SK-N-SH (cell line): ENCODE measurements at regions of chr12 and their contacts with region 1.

Region 1: GRCh38 chr12:89019408-89020120 is 332.7 kb downstream of the DUSP6 start:
- DNase-seq: peak; percentile 72
- H3K4me3 ChIP-seq: peak overlapping the region; percentile 37 to 58
- H3K27ac ChIP-seq: peak overlapping the region in 1 of 2 experiments; percentile 45; a peak in 2 of 4 replicates
- H3K4me1 ChIP-seq: no peaks in the 10 kb centered on the region; a peak in 2 of 4 replicates
- H3K27me3 ChIP-seq: no peaks in the 10 kb centered on the region
- CTCF ChIP-seq: peak; percentile 89
- EP300 ChIP-seq: no peak
- RAD21 ChIP-seq: peak; percentile 97

Region 2: GRCh38 chr12:88960213-88960878 is 59.2 kb before region 1 on chr12:
- CTCF ChIA-PET with region 1: no interaction called
- POLR2A ChIA-PET with region 1: no interaction called
- DNase-seq: no peak
- H3K4me3 ChIP-seq: no peak overlapping the region
- H3K27ac ChIP-seq: 0 out of 4 replicates have a peak overlapping the region, but pooled peaks of 1 of the 2 experiments have one; percentile 2
- H3K4me1 ChIP-seq: no peaks in the 10 kb centered on the region; a peak in 1 of 4 replicates
- H3K27me3 ChIP-seq: no peaks in the 10 kb centered on the region
- CTCF ChIP-seq: no peak
- EP300 ChIP-seq: no peak
- RAD21 ChIP-seq: no peak

Region 3: DNA sequence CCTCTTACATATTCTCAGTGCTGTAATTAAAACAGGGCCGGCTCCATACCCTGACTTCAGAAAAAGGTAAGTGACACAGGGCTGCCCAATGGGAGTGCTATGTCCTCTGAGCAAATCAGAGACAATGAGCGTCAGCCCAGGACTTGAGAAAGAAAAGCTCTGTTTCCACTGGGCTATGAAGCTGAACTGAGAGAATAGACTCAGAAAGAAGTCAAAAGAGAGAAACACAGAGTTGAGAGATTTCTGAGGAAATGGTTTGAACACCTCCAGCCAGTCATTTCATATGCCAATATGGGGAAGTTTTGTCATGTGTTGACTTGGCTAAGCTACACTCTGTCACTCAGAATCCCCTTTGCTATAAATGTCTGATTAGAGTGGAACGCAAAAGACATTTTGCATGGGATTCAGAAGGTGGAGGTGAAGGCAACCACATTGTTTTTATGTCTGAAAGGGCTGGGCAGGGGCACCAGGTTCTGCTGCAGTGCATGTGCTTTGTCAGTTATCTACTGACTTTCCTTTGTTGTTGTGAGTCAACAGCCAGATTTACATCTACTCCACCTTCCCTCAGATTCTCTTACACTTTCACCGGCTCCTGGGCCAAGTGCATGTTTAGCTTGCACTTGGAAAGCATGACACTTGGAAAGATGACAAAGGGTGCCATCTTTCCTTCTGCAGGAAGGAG is 19.4 kb after region 1 on chr12:
- CTCF ChIA-PET with region 1: interaction called, 23 read pairs
- POLR2A ChIA-PET with region 1: no interaction called
- DNase-seq: no peak
- H3K4me3 ChIP-seq: no peak overlapping the region
- H3K27ac ChIP-seq: peak overlapping the region in 1 of 2 experiments; percentile 67; a peak in 2 of 4 replicates
- H3K4me1 ChIP-seq: peaks cover 6 to 7% of the 10 kb centered on the region in 2 experiments; a peak in 2 of 4 replicates
- H3K27me3 ChIP-seq: no peaks in the 10 kb centered on the region
- CTCF ChIP-seq: no peak
- EP300 ChIP-seq: no peak
- RAD21 ChIP-seq: no peak

Region 4: GRCh38 chr12:89098441-89099112 is 79.0 kb after region 1 on chr12:
- CTCF ChIA-PET with region 1: no interaction called
- POLR2A ChIA-PET with region 1: no interaction called
- DNase-seq: peak; percentile 4
- H3K4me3 ChIP-seq: no peak overlapping the region
- H3K27ac ChIP-seq: peak overlapping the region in 1 of 2 experiments; percentile 4; a peak in 1 of 4 replicates
- H3K4me1 ChIP-seq: peaks cover 10 to 23% of the 10 kb centered on the region in 2 experiments; a peak in 3 of 4 replicates
- H3K27me3 ChIP-seq: no peaks in the 10 kb centered on the region
- CTCF ChIP-seq: no peak
- EP300 ChIP-seq: no peak
- RAD21 ChIP-seq: no peak

Region 5: DNA sequence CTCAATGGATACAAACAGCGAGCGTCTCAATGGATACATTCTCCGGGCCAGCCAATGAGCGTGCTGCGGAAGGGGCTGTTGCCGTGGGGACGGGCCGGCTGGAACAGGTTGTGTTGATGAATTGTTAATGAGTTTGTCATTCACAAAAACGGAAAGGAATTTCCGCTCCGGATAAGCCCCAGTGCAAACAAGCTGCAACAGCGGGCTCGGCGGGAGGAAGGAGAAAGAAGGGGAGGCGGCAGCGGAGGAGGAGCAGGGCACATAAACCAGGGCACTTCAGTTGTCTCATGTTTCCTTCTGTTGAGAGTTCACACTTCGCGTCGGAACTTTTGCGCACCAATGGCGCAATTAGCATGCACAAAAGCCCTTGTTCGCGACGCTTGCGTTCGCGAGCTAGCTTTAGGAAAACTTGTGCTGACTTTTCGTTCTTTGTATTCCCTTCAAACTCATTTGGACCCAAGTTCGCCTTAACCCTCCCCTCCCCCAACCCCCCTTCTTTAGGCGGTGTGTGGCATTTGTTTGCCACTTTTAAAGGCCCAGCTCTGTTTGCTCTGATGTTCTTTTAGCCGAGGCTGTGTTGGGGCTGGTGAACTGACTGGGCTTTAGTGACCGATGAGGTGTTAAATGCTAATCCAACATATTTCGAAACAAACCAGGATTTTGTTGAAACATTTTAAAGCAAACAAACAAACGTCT is 333.1 kb after region 1 on chr12 and contains the start of gene DUSP6:
- CTCF ChIA-PET with region 1: interaction called, 12 read pairs
- POLR2A ChIA-PET with region 1: interaction called, 5 read pairs
- DNase-seq: peak; percentile 93
- H3K4me3 ChIP-seq: peak within 1 kb of the TSS; percentile 94 to 99
- H3K27ac ChIP-seq: peak within 1 kb of the TSS; percentile 98 to 100
- H3K4me1 ChIP-seq: peaks cover 22 to 43% of the 10 kb centered on the region in 2 experiments; a peak in 3 of 4 replicates
- H3K27me3 ChIP-seq: no peaks in the 10 kb centered on the region
- CTCF ChIP-seq: no peak
- EP300 ChIP-seq: peak; percentile 75 to 78; a peak in 2 of 4 replicates
- RAD21 ChIP-seq: no peak
- polyA plus RNA-seq, gene DUSP6: 64.8 and 71.4 TPM in 2 replicates

Region 6: DNA sequence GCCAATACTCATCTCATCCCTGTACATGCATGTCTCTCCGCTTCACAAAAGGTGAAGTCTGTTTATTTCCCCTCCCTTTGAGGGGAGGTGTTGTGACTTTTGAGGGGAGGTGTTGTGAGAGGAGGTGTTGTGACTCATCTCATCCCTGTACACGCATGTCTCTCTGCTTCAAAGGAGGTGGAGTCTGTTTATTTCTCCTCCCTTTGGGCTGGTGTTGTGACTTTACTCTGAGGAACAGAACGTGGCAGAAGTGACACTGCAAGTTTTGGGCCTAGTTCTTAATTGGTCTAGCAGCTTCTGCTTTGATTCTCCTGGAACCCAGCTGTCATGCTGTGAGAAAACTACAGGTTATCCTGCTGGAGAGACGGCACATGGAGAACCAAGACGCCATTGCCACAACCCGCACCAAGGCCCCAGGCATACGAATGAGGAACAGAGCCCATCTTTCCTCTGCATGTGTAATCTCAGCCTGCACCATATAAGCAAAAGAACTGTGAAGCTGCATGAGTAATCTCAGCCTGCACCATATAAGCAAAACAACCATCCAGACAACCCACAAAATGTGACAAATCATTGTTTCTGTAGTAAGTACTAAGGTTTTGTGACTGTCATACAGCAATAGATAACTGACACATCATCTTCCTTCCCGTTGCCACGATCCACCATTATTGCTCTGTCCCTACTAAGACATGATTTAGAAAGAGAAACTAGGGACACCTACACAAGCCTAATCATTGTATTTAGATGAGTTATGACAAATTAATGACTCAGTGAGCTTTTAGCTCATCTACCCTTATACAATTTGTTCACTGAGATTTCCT is 475.1 kb after region 1 on chr12:
- CTCF ChIA-PET with region 1: interaction called, 10 read pairs
- POLR2A ChIA-PET with region 1: no interaction called
- DNase-seq: no peak
- H3K4me3 ChIP-seq: no peak overlapping the region
- H3K27ac ChIP-seq: peak overlapping the region in 1 of 2 experiments; percentile 3; a peak in 1 of 4 replicates
- H3K4me1 ChIP-seq: no peaks in the 10 kb centered on the region
- H3K27me3 ChIP-seq: no peaks in the 10 kb centered on the region
- CTCF ChIP-seq: no peak
- EP300 ChIP-seq: no peak
- RAD21 ChIP-seq: no peak